ENCODE measurements at regions of chr5 and their contacts with region 1.

Region 1: DNA sequence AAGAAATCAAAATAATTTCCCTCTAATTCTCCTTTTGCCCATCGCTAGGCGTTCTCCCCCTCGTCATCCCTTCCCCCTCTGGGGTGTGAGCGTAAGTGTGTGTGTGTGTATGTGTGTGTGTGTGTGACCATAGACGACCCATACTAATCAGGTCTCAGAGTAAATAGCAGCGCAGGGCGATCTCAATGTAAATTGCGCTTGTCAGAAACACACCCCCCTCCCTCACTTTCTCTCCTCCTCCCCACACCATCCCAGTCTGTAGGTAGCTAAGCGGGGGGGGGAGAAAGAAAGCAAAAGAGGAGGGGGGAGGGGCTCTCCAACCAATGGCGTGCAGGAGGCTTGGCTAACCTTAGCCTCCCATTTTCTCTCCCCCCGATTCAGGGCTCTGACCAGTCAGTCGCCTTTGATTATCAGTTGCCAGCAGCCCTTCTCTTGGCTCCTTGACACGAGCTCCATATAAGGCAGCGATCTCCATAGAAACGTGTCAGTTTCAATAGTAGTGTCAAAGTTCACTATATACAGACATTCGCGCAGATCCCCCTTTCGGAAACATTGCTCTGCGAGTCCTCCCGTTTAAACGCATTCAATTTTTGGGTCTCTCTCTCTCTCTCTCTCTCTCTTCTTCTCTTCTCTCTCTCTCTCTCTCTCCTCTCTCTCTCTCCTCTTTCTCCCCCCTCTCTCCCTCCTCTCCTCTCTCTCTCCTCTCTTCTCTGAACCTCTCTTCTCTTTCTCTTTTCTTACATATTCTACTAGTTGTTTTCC is at the start of gene NR2F1:
- DNase-seq: peak; percentile 55
- H3K4me3 ChIP-seq: peak within 1 kb of the TSS; percentile 19 to 55 (median 50)
- H3K27ac ChIP-seq: peak within 1 kb of the TSS; percentile 53 to 65 (median 54)
- H3K4me1 ChIP-seq: peaks cover 9 to 60% (median 40%) of the 10 kb centered on the region in 4 donors
- H3K27me3 ChIP-seq: peaks cover 94% of the 10 kb centered on the region
- CTCF ChIP-seq: peak in 4 of 5 experiments; percentile 11 to 82 (median 46)
- EP300 ChIP-seq: no peak
- POLR2A ChIP-seq: peak; percentile 27
- total RNA-seq, gene NR2F1: 1.5 to 6.2 (median 3.2) TPM

Region 2: GRCh38 chr5:92418341-92418740 is 1164.5 kb before region 1 on chr5:
- in situ Hi-C with region 1: no loop called
- intact Hi-C with region 1: no loop called
- DNase-seq: no peak
- H3K4me3 ChIP-seq: no peak overlapping the region
- H3K27ac ChIP-seq: no peak overlapping the region
- H3K4me1 ChIP-seq: no peaks in the 10 kb centered on the region
- H3K27me3 ChIP-seq: no peaks in the 10 kb centered on the region
- CTCF ChIP-seq: no peak
- EP300 ChIP-seq: no peak
- POLR2A ChIP-seq: no peak

Region 3: DNA sequence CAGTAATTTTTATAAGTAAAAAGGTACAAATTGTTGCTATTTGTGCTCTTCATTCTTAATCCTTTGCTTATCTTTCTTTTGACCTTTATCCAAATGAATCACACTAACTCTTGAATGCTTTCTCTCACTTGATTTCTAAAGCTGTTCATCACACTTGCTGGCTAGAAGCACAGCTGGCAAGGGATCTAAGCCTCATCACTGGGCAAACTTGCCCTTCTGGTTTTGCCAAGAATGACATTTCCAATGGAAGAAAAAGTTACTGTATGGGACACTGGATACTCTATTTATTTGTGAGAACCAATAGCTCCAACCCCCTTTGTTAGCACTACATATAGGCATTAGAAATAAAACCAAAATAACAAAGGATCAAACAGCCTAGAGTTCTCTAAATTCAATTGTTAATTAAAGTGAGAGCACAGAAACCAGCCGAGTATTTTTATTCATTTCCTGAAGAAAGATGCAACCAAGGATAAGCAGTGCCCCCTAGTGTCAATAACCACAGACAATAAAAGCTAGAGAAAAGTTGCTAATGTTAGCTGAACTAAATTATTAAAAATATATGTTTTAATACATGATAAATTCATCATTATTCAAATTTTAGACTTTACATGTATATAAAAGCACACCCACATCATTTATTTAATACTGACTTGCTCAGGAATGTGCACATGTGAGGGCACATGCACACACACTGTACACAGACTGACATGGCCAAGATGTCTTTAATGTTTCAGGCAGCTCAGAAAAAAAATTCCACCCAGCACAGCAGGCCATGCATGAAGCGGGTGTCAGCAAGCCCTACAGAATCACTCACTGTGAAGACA is 218.3 kb after region 1 on chr5:
- in situ Hi-C with region 1: loop called in 1 of 4 experiments (anchors 25 kb)
- intact Hi-C with region 1: loop called (anchors 10 kb)
- DNase-seq: no peak
- H3K4me3 ChIP-seq: no peak overlapping the region
- H3K27ac ChIP-seq: no peak overlapping the region
- H3K4me1 ChIP-seq: peaks cover 0 to 6% (median 3%) of the 10 kb centered on the region in 4 donors
- H3K27me3 ChIP-seq: no peaks in the 10 kb centered on the region
- CTCF ChIP-seq: peak; percentile 60 to 71 (median 65)
- EP300 ChIP-seq: no peak
- POLR2A ChIP-seq: no peak

Region 4: GRCh38 chr5:93915142-93915553 is 332.3 kb after region 1 on chr5:
- in situ Hi-C with region 1: loop called in 2 of 4 experiments (anchors 25 kb)
- intact Hi-C with region 1: no loop called
- DNase-seq: no peak
- H3K4me3 ChIP-seq: no peak overlapping the region
- H3K27ac ChIP-seq: no peak overlapping the region
- H3K4me1 ChIP-seq: no peaks in the 10 kb centered on the region
- H3K27me3 ChIP-seq: no peaks in the 10 kb centered on the region
- CTCF ChIP-seq: peak; percentile 28 to 50 (median 46)
- EP300 ChIP-seq: no peak
- POLR2A ChIP-seq: no peak

Measured in transverse colon (tissue), 4 donors.